ENCODE measurements at regions of chr3 and their contacts with region 1.

Region 1: DNA sequence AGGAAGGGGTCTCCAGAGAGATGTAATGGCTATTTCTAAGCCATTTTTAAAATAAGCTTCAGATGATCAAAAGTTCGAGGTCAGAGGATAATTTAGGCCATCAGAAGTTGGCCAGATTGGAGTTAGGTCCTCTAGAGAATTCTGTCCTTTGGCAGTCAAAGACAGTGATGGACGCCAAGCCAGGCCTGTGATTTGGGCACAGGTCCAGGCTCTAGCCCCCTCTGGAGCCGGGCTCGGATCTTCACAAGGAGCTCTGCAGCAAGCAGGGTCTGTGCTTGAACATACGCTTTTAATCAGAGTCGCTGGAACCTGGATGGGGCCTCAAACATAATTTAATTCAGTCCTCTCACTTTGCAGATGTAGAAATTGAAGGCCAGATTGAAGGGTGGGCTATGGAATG is 151.4 kb upstream of the BCL6 start:
- DNase-seq: peak; percentile 53
- H3K4me3 ChIP-seq: no peak overlapping the region
- H3K27ac ChIP-seq: no peak overlapping the region
- H3K4me1 ChIP-seq: no peaks in the 10 kb centered on the region
- H3K27me3 ChIP-seq: no peaks in the 10 kb centered on the region
- CTCF ChIP-seq: no peak
- EP300 ChIP-seq: no peak
- POLR2A ChIP-seq: no peak

Region 2: GRCh38 chr3:187274977-187275338 is 621.7 kb before region 1 on chr3:
- intact Hi-C with region 1: no loop called
- DNase-seq: no peak
- H3K4me3 ChIP-seq: no peak overlapping the region
- H3K27ac ChIP-seq: no peak overlapping the region
- H3K4me1 ChIP-seq: peaks cover 0 to 11% (median 3%) of the 10 kb centered on the region in 4 donors
- H3K27me3 ChIP-seq: no peaks in the 10 kb centered on the region
- CTCF ChIP-seq: no peak
- EP300 ChIP-seq: no peak
- POLR2A ChIP-seq: no peak

Region 3: GRCh38 chr3:187544296-187544695 is 352.4 kb before region 1 on chr3:
- intact Hi-C with region 1: no loop called
- DNase-seq: no peak
- H3K4me3 ChIP-seq: no peak overlapping the region
- H3K27ac ChIP-seq: no peak overlapping the region
- H3K4me1 ChIP-seq: no peaks in the 10 kb centered on the region
- H3K27me3 ChIP-seq: no peaks in the 10 kb centered on the region
- CTCF ChIP-seq: no peak
- EP300 ChIP-seq: no peak
- POLR2A ChIP-seq: no peak

Region 4: DNA sequence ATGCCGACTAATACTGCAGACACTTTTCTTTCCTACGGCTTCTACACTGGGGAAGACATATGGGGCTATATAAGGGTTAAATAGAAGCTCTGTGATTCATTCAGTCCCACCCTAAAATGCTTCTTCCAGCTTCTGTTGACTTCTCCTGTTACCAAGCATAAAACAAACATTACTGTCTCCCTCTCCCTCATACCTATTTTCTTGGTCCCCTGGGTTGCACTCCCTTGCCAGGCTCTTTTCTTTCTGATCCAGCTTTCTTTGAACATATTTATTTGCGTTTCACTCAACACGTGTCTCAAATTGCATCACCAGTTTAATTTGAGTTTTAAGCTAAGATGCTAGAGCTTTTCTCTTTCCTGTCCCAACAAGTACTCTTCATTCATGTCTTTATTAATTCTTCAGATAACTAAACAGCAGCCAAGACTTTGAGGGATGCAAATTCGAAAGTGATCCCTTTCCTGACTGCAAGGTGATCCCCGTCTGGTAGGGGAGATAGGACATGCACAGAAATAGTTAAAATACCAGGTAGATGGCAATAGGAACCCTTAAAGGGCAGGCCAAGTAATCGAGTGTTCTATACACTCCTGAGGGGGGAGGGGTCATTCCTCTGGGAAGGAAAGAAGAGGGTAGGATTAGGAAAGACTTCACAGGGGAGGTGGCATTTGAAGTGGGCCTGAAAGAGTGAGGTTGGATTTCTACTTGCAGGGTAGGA is 47.2 kb after region 1 on chr3:
- intact Hi-C with region 1: loop called (anchors 5 kb)
- DNase-seq: no peak
- H3K4me3 ChIP-seq: no peak overlapping the region
- H3K27ac ChIP-seq: no peak overlapping the region
- H3K4me1 ChIP-seq: no peaks in the 10 kb centered on the region
- H3K27me3 ChIP-seq: no peaks in the 10 kb centered on the region
- CTCF ChIP-seq: no peak
- EP300 ChIP-seq: no peak
- POLR2A ChIP-seq: no peak

Measured in sigmoid colon (tissue), 7 donors.